CD14-positive monocyte (primary cell): ENCODE measurements at regions of chr14 and their contacts with region 1.

Region 1: DNA sequence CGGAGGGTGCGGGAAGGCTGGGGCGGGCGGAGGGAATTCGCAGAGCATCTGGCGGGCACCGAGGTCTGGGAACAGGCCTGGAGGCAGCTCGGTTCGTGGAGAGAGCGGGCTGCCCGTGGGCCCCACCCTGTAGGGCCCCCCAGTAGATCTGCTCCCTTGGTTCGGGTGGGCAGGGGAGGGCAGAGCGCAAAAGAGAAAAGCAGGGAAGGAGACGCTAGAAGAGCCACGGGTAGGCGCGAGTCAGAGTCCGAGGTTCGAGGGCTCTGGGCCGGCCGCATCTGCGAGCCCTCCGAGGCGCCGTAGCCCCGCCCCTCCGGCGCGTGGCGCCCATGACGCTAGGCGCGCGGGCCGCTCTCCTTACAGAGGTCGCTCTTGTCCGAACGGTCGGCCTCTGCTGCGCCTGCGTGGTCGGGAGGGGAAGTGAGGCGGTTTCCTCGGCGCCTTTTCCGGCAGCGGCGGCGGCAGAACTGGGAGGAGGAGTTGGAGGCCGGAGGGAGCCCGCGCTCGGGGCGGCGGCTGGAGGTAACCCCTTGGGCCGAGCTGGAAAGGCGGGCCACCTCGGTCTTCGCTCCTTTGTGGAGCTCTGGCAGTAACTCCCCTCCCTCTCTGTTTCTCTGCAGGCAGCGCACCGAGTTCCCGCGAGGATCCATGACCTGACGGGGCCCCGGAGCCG is at the start of gene ARF6:
- DNase-seq: peak; percentile 96 to 98 (median 97)
- H3K4me3 ChIP-seq: peak within 1 kb of the TSS; percentile 93 to 100 (median 99)
- H3K4me3 Mint-ChIP-seq: peak within 1 kb of the TSS; percentile 93 to 97
- H3K27ac ChIP-seq: peak within 1 kb of the TSS; percentile 99
- H3K27ac Mint-ChIP-seq: peak within 1 kb of the TSS; percentile 95 to 100 (median 99)
- H3K4me1 ChIP-seq: peaks cover 20 to 44% of the 10 kb centered on the region in 2 donors
- H3K4me1 Mint-ChIP-seq: peaks cover 18% of the 10 kb centered on the region
- H3K27me3 ChIP-seq: no peaks in the 10 kb centered on the region
- H3K27me3 Mint-ChIP-seq: peaks cover 0 to 9% (median 0%) of the 10 kb centered on the region in 3 donors
- CTCF ChIP-seq: no peak
- polyA plus RNA-seq, gene ARF6: 76.4 to 136 (median 120) TPM

Region 2: GRCh38 chr14:49862089-49862673 is 30.6 kb before region 1 on chr14:
- intact Hi-C with region 1: loop called (anchors 2 to 5 kb)
- DNase-seq: peak; percentile 72 to 84 (median 84)
- H3K4me3 ChIP-seq: peak overlapping the region; percentile 88 to 99 (median 97)
- H3K4me3 Mint-ChIP-seq: peak overlapping the region in 1 of 2 donors; percentile 98
- H3K27ac ChIP-seq: peak overlapping the region; percentile 90 to 91
- H3K27ac Mint-ChIP-seq: no peak overlapping the region
- H3K4me1 ChIP-seq: peaks cover 42 to 52% of the 10 kb centered on the region in 2 donors
- H3K4me1 Mint-ChIP-seq: peaks cover 20% of the 10 kb centered on the region
- H3K27me3 ChIP-seq: no peaks in the 10 kb centered on the region
- H3K27me3 Mint-ChIP-seq: peaks cover 0 to 5% (median 0%) of the 10 kb centered on the region in 3 donors
- CTCF ChIP-seq: peak; percentile 100

Region 3: DNA sequence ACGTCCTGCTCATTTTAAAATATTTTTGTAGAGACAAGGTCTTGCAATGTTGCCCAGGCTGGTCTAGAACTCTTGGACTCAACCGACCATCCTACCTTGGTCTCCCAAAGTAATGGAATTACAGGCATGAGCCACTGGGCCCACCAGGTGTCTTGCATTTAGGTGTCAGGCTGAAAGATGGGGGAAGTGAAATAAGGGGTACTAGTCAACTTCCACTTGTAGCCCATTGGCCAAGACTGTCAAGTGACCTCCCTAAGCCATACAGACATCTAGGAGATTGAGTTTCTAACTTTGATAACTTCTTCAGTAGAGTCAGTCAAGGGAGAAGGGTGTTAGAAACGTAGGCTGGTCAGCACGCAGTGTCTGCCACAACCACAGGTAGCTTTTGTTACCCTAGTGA is 32.1 kb after region 1 on chr14:
- intact Hi-C with region 1: loop called in 1 of 2 experiments (anchors 5 kb)
- DNase-seq: no peak
- H3K4me3 ChIP-seq: no peak overlapping the region
- H3K4me3 Mint-ChIP-seq: no peak overlapping the region
- H3K27ac ChIP-seq: no peak overlapping the region
- H3K27ac Mint-ChIP-seq: peak overlapping the region in 1 of 7 donors; percentile 45
- H3K4me1 ChIP-seq: peaks cover 15 to 29% of the 10 kb centered on the region in 2 donors
- H3K4me1 Mint-ChIP-seq: peaks cover 24% of the 10 kb centered on the region
- H3K27me3 ChIP-seq: no peaks in the 10 kb centered on the region
- H3K27me3 Mint-ChIP-seq: peaks cover 0 to 5% (median 0%) of the 10 kb centered on the region in 3 donors
- CTCF ChIP-seq: no peak

Region 4: DNA sequence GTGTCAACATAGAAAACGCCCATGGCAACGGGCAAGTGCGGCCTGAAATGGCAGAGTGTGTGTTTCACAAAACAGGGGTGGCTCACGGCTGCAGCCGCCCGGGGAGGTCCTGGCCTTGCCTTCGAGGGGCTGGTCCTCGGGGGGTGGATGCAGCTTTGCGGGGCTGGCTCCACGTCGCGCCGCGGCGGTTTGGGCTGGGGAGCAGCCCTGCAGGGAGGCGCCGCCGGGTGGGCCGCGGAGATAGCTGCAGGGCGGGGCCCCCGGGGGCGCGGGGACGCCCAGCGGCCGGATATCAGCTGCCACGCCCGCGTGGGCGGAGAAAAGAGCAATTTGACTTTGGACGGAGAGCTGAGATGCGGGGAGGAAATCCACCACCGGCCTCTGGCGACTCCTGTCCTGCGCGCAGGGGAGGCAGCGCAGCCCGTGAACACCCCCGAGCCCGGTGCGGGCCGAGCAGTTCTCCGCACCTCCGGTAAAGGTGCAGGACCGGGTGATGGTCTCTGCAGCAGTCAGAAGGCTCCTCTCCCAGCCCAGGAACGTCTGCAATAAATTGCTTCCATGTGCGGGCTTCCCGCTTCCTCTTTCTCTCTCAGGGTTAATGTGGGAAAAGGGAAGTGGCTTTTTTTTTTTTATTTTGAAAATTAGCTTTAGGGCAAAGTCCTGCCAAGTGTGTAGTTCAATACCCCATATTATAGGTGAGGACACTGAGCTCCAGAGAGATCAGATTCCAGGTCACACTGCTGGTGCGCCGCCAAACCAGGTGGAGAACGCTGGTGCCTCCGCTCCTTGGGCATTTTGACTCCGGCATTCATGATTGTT is 110.7 kb after region 1 on chr14:
- intact Hi-C with region 1: loop called in 1 of 2 experiments (anchors 5 kb)
- DNase-seq: peak; percentile 79 to 86 (median 80)
- H3K4me3 ChIP-seq: peak overlapping the region; percentile 55 to 80 (median 77)
- H3K4me3 Mint-ChIP-seq: peak overlapping the region; percentile 87 to 96
- H3K27ac ChIP-seq: peak overlapping the region; percentile 83 to 99
- H3K27ac Mint-ChIP-seq: peak overlapping the region; percentile 98 to 99 (median 99)
- H3K4me1 ChIP-seq: peaks cover 57 to 65% of the 10 kb centered on the region in 2 donors
- H3K4me1 Mint-ChIP-seq: peaks cover 51% of the 10 kb centered on the region
- H3K27me3 ChIP-seq: no peaks in the 10 kb centered on the region
- H3K27me3 Mint-ChIP-seq: no peaks in the 10 kb centered on the region
- CTCF ChIP-seq: peak; percentile 11

Region 5: DNA sequence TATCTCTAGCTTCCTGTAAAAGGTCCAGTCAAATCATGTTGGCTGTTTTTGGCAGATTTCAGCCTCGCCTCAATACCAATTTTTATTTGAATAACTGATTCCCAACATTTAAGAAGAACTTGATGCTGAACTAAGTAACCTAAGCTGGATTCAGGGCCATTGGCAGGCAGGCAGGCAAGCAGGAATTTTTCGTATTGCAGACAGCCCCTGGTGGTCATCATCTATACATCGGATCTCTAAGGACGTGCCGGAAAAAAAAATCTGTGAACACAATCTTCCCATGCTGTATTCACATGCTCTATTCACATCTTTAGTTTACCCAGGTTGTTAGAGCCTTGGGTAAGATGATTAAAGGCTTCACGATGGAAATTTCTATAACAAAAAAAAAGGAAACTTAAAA is 216.6 kb after region 1 on chr14:
- intact Hi-C with region 1: loop called in 1 of 2 experiments (anchors 10 kb)
- DNase-seq: no peak
- H3K4me3 ChIP-seq: no peak overlapping the region
- H3K4me3 Mint-ChIP-seq: no peak overlapping the region
- H3K27ac ChIP-seq: no peak overlapping the region
- H3K27ac Mint-ChIP-seq: no peak overlapping the region
- H3K4me1 ChIP-seq: no peaks in the 10 kb centered on the region
- H3K4me1 Mint-ChIP-seq: no peaks in the 10 kb centered on the region
- H3K27me3 ChIP-seq: no peaks in the 10 kb centered on the region
- H3K27me3 Mint-ChIP-seq: no peaks in the 10 kb centered on the region
- CTCF ChIP-seq: no peak

Region 6: GRCh38 chr14:50599700-50600444 is 707.1 kb after region 1 on chr14:
- intact Hi-C with region 1: no loop called
- DNase-seq: peak in 1 of 3 donors; percentile 1
- H3K4me3 ChIP-seq: no peak overlapping the region
- H3K4me3 Mint-ChIP-seq: no peak overlapping the region
- H3K27ac ChIP-seq: no peak overlapping the region
- H3K27ac Mint-ChIP-seq: no peak overlapping the region
- H3K4me1 ChIP-seq: no peaks in the 10 kb centered on the region
- H3K4me1 Mint-ChIP-seq: no peaks in the 10 kb centered on the region
- H3K27me3 ChIP-seq: no peaks in the 10 kb centered on the region
- H3K27me3 Mint-ChIP-seq: peaks cover 0 to 3% (median 1%) of the 10 kb centered on the region in 3 donors
- CTCF ChIP-seq: peak; percentile 40